Panc1 (cell line): ENCODE measurements at regions of chr1 and their contacts with region 1.

Region 1: DNA sequence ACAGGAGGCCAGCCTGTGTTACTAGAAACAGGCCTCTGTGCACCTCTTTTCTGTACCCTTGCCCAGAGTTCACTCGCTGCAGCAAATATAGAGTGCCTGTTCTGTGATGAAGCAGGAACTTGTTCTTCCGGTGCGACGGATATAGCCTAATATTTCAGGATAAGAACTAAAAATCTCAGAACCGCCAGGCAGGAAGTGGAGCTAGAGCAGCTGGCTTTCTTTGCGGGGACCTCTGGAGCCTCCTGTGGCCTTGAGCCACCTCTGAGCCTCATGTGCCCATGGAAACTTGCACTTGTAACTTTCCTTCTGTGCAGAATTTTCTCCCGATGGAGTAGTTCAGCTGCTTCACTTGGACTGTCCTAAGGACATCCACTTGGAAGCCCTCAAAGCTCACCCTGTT is 44.5 kb upstream of the VAMP3 start:
- DNase-seq: no peak
- ATAC-seq: no peak
- H3K4me3 ChIP-seq: no peak overlapping the region
- H3K27ac ChIP-seq: no peak overlapping the region
- H3K4me1 ChIP-seq: no peaks in the 10 kb centered on the region
- H3K27me3 ChIP-seq: no peaks in the 10 kb centered on the region
- CTCF ChIP-seq: no peak

Region 2: DNA sequence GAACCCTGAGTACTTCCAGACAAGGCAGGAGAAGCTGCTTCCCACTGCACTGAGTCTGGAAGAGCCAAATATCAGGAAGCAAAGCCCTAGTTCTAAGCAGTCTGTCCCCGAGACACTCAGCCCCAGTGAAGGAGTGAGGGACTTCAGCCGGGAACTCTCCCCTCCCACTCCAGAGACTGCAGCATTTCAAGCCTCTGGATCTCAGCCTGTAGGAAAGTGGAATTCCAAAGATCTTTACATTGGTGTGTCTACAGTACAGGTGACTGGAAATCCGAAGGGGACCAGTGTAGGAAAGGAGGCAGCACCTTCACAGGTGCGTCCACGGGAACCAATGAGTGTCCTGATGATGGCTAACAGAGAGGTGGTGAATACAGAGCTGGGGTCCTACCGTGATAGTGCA is 11.4 kb after region 1 on chr1:
- CTCF ChIA-PET with region 1: no interaction called
- POLR2A ChIA-PET with region 1: no interaction called
- in situ Hi-C with region 1: no loop called
- intact Hi-C with region 1: no loop called
- DNase-seq: no peak
- ATAC-seq: no peak
- H3K4me3 ChIP-seq: no peak overlapping the region
- H3K27ac ChIP-seq: no peak overlapping the region
- H3K4me1 ChIP-seq: no peaks in the 10 kb centered on the region
- H3K27me3 ChIP-seq: no peaks in the 10 kb centered on the region
- CTCF ChIP-seq: no peak

Region 3: GRCh38 chr1:7808253-7808844 is 81.7 kb after region 1 on chr1:
- CTCF ChIA-PET with region 1: interaction called, 13 read pairs
- POLR2A ChIA-PET with region 1: no interaction called
- in situ Hi-C with region 1: no loop called
- intact Hi-C with region 1: no loop called
- DNase-seq: no peak
- ATAC-seq: peak; percentile 81
- H3K4me3 ChIP-seq: no peak overlapping the region
- H3K27ac ChIP-seq: no peak overlapping the region
- H3K4me1 ChIP-seq: no peaks in the 10 kb centered on the region
- H3K27me3 ChIP-seq: no peaks in the 10 kb centered on the region
- CTCF ChIP-seq: peak; percentile 67; the same call in 1 of the 2 replicates

Region 4: DNA sequence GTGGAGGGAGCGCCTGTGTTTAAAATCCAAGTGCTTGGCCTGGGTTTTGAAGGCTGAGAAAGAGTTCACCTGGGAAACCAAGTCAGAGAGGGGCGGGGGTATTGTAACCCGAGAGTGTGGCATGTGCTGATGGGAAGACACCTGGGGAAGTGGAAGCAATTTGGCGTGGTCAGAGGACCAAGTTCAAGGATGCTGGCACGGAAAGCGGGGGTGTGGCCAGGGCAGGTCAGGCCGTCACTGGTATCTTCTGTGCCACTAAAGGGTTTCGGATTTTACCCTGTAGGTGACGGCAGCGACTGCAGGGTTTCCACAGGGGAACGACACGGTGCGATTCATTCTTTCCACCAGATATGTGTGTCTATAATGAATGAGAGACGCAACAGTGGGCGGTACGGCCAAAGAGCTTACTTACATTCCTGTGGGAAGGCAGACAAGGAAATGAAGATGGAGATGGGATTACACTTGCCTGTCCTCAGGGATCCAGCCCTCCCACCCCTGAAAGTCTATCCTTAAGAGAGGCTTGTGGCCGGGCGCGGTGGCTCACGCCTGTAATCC is 1250.3 kb after region 1 on chr1:
- CTCF ChIA-PET with region 1: no interaction called
- POLR2A ChIA-PET with region 1: interaction called, 13 read pairs
- in situ Hi-C with region 1: no loop called
- intact Hi-C with region 1: no loop called
- DNase-seq: no peak
- ATAC-seq: no peak
- H3K4me3 ChIP-seq: no peak overlapping the region
- H3K27ac ChIP-seq: no peak overlapping the region
- H3K4me1 ChIP-seq: no peaks in the 10 kb centered on the region
- H3K27me3 ChIP-seq: no peaks in the 10 kb centered on the region
- CTCF ChIP-seq: no peak